HEK293 (cell line): ENCODE measurements at regions of chr3 and their contacts with region 1.

Region 1: DNA sequence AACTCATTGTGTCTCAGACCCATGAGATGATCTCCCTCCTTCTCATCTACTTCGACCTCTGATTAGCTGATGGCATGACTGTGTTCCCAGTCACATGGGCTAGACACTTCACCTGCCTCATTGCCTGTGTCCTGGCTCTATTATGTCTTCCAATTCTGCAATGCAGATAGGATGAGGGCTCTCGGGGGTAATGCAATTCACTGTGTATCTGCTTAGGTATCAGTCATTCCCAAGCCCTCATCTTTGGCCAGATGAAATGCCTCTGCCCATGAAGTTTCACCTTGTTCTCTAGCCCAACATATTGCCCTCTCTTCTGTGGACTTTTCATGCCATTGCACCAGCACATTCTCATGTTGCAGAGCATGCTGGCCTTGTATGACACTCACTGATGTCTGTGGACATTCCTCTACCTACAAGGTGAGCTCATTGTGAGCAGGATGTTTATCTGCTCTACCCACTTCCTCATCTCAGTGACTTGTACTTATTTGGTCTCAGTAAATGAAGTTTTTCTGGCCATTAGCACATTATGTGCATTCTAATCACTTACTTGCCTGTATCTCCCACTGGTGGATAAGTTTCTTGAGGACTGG is 32.3 kb downstream of the MOBP start:
- H3K4me3 ChIP-seq: no peak overlapping the region
- H3K27ac ChIP-seq: no peak overlapping the region
- H3K4me1 ChIP-seq: no peaks in the 10 kb centered on the region
- CTCF ChIP-seq: no peak

Region 2: DNA sequence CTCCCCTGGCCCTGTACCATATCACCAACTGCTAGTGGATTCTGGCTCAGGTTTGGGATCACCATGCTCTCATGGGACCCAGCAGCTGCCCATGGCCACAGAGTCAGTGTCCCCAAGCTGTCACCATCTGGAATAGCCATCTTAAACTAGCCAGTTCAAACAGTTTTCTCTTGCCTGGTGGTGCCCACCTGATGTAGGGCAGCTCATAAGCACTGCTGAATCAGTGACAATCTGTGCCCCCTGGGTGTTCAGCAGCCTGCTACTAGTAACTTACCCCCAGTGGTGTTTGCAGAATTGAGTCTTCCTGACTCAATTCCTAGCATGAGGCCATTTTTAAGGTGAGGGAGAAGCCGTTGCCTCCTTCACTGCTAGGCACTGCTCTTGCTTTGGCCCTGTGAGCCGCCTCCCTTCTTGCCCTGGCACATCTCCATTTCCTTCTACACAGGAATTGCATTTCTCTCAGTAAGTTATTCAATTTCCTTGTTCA is 85.3 kb before region 1 on chr3:
- CTCF ChIA-PET with region 1: interaction called, 21 read pairs
- POLR2A ChIA-PET with region 1: no interaction called
- H3K4me3 ChIP-seq: no peak overlapping the region
- H3K27ac ChIP-seq: no peak overlapping the region
- H3K4me1 ChIP-seq: no peaks in the 10 kb centered on the region
- CTCF ChIP-seq: no peak

Region 3: GRCh38 chr3:39447637-39448483 is 51.9 kb before region 1 on chr3:
- CTCF ChIA-PET with region 1: interaction called, 86 read pairs
- POLR2A ChIA-PET with region 1: no interaction called
- H3K4me3 ChIP-seq: no peak overlapping the region
- H3K27ac ChIP-seq: no peak overlapping the region
- H3K4me1 ChIP-seq: no peaks in the 10 kb centered on the region
- CTCF ChIP-seq: peak; percentile 61